MCF 10A (cell line): ENCODE measurements at regions of chr5 and their contacts with region 1.

Region 1: GRCh38 chr5:168291464-168291961 is at the start of gene WWC1:
- DNase-seq: peak; percentile 88
- H3K4me3 Mint-ChIP-seq: peak within 1 kb of the TSS; percentile 82
- H3K27ac Mint-ChIP-seq: peak within 1 kb of the TSS; percentile 81
- H3K4me1 Mint-ChIP-seq: peaks cover 51% of the 10 kb centered on the region
- H3K27me3 Mint-ChIP-seq: no peaks in the 10 kb centered on the region
- CTCF ChIP-seq: no peak
- total RNA-seq, gene WWC1: 27.8 and 47.0 TPM in 2 replicates

Region 2: GRCh38 chr5:168301593-168302388 is 10.3 kb after region 1 on chr5:
- CTCF ChIA-PET with region 1: interaction called, 27 read pairs
- POLR2A ChIA-PET with region 1: interaction called, 23 read pairs
- intact Hi-C with region 1: no loop called
- DNase-seq: peak; percentile 71
- H3K4me3 Mint-ChIP-seq: no peak overlapping the region
- H3K27ac Mint-ChIP-seq: peak overlapping the region; percentile 83
- H3K4me1 Mint-ChIP-seq: peaks cover 25% of the 10 kb centered on the region
- H3K27me3 Mint-ChIP-seq: no peaks in the 10 kb centered on the region
- CTCF ChIP-seq: no peak

Region 3: DNA sequence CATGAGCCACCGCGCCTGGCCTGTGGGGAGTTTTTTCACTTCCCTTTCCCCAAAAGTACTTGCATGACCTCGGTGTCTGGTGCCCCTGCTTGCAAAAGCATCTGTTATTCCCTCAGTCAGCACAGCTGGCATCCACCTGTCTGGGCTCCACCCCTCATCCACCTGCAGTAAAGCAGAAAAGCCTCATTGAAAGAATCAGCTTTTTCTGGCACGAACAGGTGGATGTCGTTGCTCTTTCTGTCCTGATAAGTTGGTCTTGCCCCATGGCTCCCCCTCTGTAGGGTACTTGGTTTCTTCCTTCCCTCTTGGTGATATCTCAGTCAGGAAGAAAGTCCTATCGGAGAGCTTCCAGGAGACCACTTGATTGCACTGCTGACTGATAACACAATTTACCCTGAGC is 37.3 kb after region 1 on chr5:
- CTCF ChIA-PET with region 1: interaction called, 22 read pairs
- POLR2A ChIA-PET with region 1: interaction called, 21 read pairs
- intact Hi-C with region 1: loop called (anchors 5 kb)
- DNase-seq: no peak
- H3K4me3 Mint-ChIP-seq: no peak overlapping the region
- H3K27ac Mint-ChIP-seq: no peak overlapping the region
- H3K4me1 Mint-ChIP-seq: peaks cover 29% of the 10 kb centered on the region
- H3K27me3 Mint-ChIP-seq: no peaks in the 10 kb centered on the region
- CTCF ChIP-seq: no peak

Region 4: DNA sequence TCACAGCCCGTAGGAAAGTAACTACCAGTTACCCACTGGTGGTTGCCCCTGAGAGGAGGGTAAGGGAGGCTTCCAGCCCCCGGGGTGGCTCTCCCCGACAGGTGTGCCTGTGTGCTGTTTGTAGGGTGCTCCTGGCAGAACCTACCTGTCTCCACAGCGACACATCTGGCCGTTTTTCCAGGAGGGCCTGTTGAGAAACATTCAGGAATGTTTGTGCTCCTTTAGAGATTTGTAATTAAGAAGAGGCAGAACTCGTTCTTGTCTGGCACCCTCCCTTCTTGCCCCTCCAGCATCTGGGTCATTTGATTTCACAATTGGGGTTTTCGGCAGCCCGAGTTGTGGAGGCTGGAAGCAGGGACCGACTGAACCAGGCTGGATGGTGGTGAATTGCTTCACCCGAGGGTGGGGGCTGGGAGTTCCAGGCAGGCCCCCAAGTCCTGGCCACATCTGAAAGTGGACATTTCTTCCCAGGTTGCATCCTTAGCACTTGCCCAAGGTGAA is 74.1 kb after region 1 on chr5:
- CTCF ChIA-PET with region 1: interaction called, 29 read pairs
- POLR2A ChIA-PET with region 1: interaction called, 32 read pairs
- intact Hi-C with region 1: loop called (anchors 2 kb)
- DNase-seq: peak; percentile 92
- H3K4me3 Mint-ChIP-seq: peak overlapping the region; percentile 20
- H3K27ac Mint-ChIP-seq: peak overlapping the region; percentile 35
- H3K4me1 Mint-ChIP-seq: peaks cover 32% of the 10 kb centered on the region
- H3K27me3 Mint-ChIP-seq: no peaks in the 10 kb centered on the region
- CTCF ChIP-seq: peak; percentile 52

Region 5: DNA sequence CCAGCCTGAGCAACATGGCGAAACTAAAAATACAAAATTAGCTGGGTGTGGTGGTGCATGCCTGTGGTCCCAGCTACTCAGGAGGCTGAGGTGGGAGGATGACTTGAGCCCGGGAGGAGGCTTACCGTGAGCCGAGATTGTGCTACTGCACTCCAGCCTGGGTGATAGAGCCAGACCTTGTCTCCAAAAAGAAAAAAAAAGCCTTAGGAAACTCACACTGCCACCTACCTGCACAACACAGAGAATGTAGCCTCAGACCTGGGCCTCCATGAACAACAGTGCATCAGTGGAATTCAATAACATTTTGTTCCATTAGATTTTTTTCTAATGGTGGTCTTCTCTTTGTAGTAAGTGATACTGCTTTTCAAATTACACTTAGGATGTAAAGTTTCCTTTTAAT is 130.9 kb after region 1 on chr5:
- CTCF ChIA-PET with region 1: interaction called, 26 read pairs
- POLR2A ChIA-PET with region 1: interaction called, 3 read pairs
- intact Hi-C with region 1: loop called (anchors 1 kb)
- DNase-seq: peak; percentile 61
- H3K4me3 Mint-ChIP-seq: no peak overlapping the region
- H3K27ac Mint-ChIP-seq: no peak overlapping the region
- H3K4me1 Mint-ChIP-seq: no peaks in the 10 kb centered on the region
- H3K27me3 Mint-ChIP-seq: no peaks in the 10 kb centered on the region
- CTCF ChIP-seq: peak; percentile 55

Region 6: GRCh38 chr5:169350759-169351240 is 1059.3 kb after region 1 on chr5:
- CTCF ChIA-PET with region 1: no interaction called
- POLR2A ChIA-PET with region 1: no interaction called
- intact Hi-C with region 1: loop called (anchors 5 kb)
- DNase-seq: peak; percentile 100
- H3K4me3 Mint-ChIP-seq: peak overlapping the region; percentile 49
- H3K27ac Mint-ChIP-seq: peak overlapping the region; percentile 75
- H3K4me1 Mint-ChIP-seq: peaks cover 53% of the 10 kb centered on the region
- H3K27me3 Mint-ChIP-seq: no peaks in the 10 kb centered on the region
- CTCF ChIP-seq: no peak